ENCODE measurements at regions of chr1 and their contacts with region 1.

Region 1: GRCh38 chr1:47725992-47726855 is 271.0 kb downstream of the TRABD2B start:
- DNase-seq: peak; percentile 83
- ATAC-seq: peak; percentile 91
- H3K4me3 Mint-ChIP-seq: peak overlapping the region; percentile 15
- H3K27ac Mint-ChIP-seq: no peak overlapping the region
- H3K4me1 Mint-ChIP-seq: peaks cover 14% of the 10 kb centered on the region
- H3K27me3 Mint-ChIP-seq: peaks cover 57% of the 10 kb centered on the region

Region 2: GRCh38 chr1:47179017-47179987 is 546.9 kb before region 1 on chr1:
- CTCF ChIA-PET with region 1: interaction called, 10 read pairs
- POLR2A ChIA-PET with region 1: no interaction called
- intact Hi-C with region 1: loop called (anchors 1 to 10 kb)
- DNase-seq: peak; percentile 91
- ATAC-seq: peak; percentile 90
- H3K4me3 Mint-ChIP-seq: peak overlapping the region; percentile 57
- H3K27ac Mint-ChIP-seq: no peak overlapping the region
- H3K4me1 Mint-ChIP-seq: peaks cover 8% of the 10 kb centered on the region
- H3K27me3 Mint-ChIP-seq: peaks cover 22% of the 10 kb centered on the region

Region 3: DNA sequence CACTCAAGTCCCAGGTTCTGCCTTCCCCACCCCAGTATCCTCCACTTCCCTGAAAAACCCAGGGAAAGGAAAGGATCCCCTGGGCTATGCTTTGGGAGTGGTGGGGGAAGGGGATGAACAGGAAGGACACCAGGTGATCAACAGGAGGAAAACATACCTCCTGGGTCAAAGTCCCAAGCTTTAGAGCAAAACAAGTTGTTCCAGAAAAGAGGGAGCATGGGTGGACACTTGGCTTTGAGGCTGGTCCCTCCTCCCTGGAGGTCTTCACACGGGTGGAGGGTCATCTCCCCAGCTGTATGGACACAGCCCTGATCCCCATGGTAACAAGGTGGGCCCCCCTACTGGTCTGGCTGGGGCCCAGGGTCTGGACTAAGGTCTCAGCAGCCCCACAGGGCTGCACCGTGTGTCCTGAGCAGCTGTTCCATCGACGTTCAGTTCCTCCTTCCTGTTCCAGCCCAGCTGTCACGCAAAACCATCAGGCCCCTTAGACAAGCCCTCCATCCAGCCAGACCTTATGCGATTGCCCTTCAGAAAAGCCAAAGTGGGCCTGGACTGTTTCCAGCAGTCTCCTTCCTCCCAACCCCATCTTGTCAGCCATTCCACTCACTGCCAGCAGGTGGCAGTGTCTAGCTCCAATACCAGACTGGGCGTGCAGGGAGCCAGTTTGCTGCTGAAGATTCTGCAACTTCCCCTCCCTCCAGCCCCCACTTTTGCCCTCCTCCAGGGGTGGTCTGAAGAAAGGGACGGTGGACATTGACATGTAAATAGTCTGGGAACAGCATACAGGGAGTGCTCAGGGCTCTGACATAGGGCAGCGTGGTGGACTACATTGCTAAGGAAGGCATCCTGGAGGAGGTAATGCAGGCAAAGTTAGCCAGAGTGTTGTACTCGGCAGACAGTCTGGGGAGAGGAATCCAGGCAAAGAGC is 533.5 kb before region 1 on chr1:
- CTCF ChIA-PET with region 1: interaction called, 6 read pairs
- POLR2A ChIA-PET with region 1: no interaction called
- intact Hi-C with region 1: loop called in 1 of 2 experiments (anchors 10 kb)
- DNase-seq: peak; percentile 77
- ATAC-seq: peak; percentile 89
- H3K4me3 Mint-ChIP-seq: no peak overlapping the region
- H3K27ac Mint-ChIP-seq: peak overlapping the region; percentile 61
- H3K4me1 Mint-ChIP-seq: no peaks in the 10 kb centered on the region
- H3K27me3 Mint-ChIP-seq: peaks cover 5% of the 10 kb centered on the region

Region 4: GRCh38 chr1:47388891-47389238 is 337.4 kb before region 1 on chr1:
- CTCF ChIA-PET with region 1: interaction called, 26 read pairs
- POLR2A ChIA-PET with region 1: no interaction called
- intact Hi-C with region 1: loop called (anchors 1 kb)
- DNase-seq: peak; percentile 76
- ATAC-seq: peak; percentile 82
- H3K4me3 Mint-ChIP-seq: no peak overlapping the region
- H3K27ac Mint-ChIP-seq: no peak overlapping the region
- H3K4me1 Mint-ChIP-seq: no peaks in the 10 kb centered on the region
- H3K27me3 Mint-ChIP-seq: peaks cover 3% of the 10 kb centered on the region

Region 5: GRCh38 chr1:47432071-47433036 is 293.9 kb before region 1 on chr1:
- CTCF ChIA-PET with region 1: interaction called, 12 read pairs
- POLR2A ChIA-PET with region 1: interaction called, 6 read pairs
- intact Hi-C with region 1: loop called (anchors 1 kb)
- DNase-seq: peak; percentile 81
- ATAC-seq: peak; percentile 55
- H3K4me3 Mint-ChIP-seq: peak overlapping the region; percentile 49
- H3K27ac Mint-ChIP-seq: no peak overlapping the region
- H3K4me1 Mint-ChIP-seq: peaks cover 31% of the 10 kb centered on the region
- H3K27me3 Mint-ChIP-seq: peaks cover 42% of the 10 kb centered on the region

Region 6: DNA sequence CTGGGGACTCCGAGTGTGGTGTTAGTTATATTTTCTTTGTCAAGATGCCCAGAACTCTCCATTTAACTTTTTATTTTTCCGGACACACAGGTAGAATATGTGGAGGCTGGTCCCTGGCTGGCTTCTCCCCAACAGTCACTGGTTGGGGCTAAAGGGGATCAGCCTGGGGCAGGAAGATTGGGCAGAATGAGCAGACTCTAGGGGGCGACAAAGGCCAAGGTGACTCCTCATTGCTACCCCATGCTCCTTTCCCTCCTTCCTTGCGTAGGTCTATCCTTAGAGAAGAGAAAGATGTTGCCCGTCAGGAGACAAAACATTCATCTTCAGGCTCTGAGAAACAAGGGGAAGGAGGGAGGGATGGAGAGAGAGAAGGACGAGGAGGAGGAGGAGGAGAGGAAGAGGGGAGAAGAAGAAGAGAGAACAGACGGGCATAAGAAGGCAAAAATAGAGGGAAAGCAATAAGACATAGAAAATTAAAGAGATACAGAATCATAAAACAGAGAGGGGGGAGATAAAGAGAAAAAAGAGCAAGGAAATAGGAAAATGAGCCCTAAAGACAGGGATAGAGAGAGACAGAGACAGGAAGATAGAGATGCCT is 198.5 kb before region 1 on chr1:
- CTCF ChIA-PET with region 1: interaction called, 4 read pairs
- POLR2A ChIA-PET with region 1: no interaction called
- intact Hi-C with region 1: loop called (anchors 5 to 10 kb)
- DNase-seq: peak; percentile 35
- ATAC-seq: no peak
- H3K4me3 Mint-ChIP-seq: no peak overlapping the region
- H3K27ac Mint-ChIP-seq: no peak overlapping the region
- H3K4me1 Mint-ChIP-seq: no peaks in the 10 kb centered on the region
- H3K27me3 Mint-ChIP-seq: peaks cover 66% of the 10 kb centered on the region

Region 7: GRCh38 chr1:47710329-47711071 is 15.7 kb before region 1 on chr1:
- CTCF ChIA-PET with region 1: interaction called, 16 read pairs
- POLR2A ChIA-PET with region 1: no interaction called
- intact Hi-C with region 1: no loop called
- DNase-seq: peak; percentile 84
- ATAC-seq: peak; percentile 83
- H3K4me3 Mint-ChIP-seq: no peak overlapping the region
- H3K27ac Mint-ChIP-seq: no peak overlapping the region
- H3K4me1 Mint-ChIP-seq: peaks cover 5% of the 10 kb centered on the region
- H3K27me3 Mint-ChIP-seq: peaks cover 64% of the 10 kb centered on the region

Measured in activated CD4-positive, alpha-beta T cell treated with anti-CD3 and anti-CD28 coated beads for 36 hours (primary cell).